ENCODE measurements at regions of chr11 and their contacts with region 1.

Region 1: DNA sequence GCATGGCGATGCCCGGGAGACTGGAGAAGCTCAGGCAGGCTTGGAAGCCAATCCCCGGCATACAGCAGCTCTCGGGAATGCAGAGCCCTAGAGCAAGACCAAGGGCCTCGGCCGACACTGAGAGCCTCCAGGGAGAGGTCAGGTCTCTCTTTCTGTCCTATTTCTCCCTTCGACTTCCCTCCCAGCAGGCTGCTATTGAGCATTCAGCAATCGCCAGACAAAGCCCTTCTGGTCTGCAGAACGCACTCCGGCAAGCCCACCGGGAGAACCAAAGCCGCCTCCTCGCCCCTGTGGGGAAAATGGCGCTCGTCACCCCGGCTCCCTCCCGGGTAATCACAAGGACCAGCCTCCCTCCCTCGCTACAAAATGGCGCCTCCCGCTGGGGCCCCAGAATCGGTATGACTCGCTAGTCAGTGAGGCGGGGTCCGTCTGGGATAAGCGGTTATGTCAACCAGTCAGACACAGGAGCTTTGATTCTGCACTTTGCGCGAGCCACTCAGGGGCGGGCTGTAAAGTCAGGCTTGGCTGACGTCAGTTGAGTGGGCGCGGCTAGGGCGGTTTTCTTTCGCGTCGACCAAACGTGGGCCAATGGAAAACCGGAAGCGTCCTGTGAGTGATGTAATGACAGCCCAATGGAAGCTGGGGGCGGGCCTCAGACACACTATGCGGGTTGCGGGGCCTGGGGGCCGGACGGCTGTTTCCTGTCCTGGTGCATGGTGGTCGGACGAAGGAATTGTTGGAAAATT is at the start of gene ZNF143:
- DNase-seq: peak; percentile 99
- ATAC-seq: peak; percentile 88
- H3K4me3 ChIP-seq: peak within 1 kb of the TSS; percentile 97 to 98 (median 98)
- H3K27ac ChIP-seq: peak within 1 kb of the TSS; percentile 99
- H3K4me1 ChIP-seq: peaks cover 22% of the 10 kb centered on the region
- H3K27me3 ChIP-seq: no peaks in the 10 kb centered on the region; a peak in 1 of 5 replicates
- CTCF ChIP-seq: no peak
- EP300 ChIP-seq: peak; percentile 12 to 15; a peak in 3 of 4 replicates
- POLR2A ChIP-seq: peak; percentile 81 to 87
- RAD21 ChIP-seq: no peak
- total RNA-seq, gene ZNF143: 22.4 and 32.9 TPM in 2 replicates

Region 2: DNA sequence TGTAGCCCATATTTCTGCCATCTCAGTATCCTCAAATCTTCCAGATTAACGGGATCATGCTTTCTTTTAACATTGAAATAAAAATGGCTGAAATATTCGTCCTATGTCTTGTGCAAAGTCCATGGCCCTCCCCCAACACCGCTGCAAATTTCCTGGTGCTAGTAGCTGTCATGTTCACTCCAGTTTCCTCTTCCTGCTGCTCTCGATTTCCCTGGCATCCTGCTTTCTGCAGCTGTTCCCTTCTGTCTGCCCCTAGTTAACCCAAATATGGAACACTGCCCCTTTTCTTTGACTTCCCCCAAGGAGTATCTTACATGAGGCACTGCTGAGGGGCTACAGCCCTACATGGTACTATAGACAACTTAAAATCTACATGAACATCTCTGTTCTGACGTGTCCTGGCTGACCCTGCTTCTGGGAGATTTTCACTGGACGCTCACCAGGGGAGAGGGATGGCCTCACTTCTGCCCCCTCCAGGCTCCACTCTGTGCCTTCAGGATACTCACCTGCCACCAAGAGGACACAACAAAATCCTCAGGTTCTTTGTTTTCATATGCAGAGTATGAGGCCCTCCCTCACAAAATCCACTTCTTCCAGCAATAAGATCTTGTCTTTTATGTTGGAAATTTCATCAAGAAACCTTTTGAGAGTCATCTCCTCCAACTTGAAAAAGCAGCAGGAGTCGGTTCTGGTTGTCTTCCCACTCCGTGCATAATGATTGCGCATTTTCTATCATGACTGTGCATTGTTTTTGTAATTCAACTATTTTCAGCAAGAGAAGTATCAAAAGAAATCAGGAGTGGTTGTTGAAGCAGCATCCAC is 339.6 kb before region 1 on chr11:
- CTCF ChIA-PET with region 1: no interaction called
- POLR2A ChIA-PET with region 1: no interaction called
- in situ Hi-C with region 1: no loop called
- intact Hi-C with region 1: no loop called
- DNase-seq: no peak
- ATAC-seq: peak; percentile 98
- H3K4me3 ChIP-seq: no peak overlapping the region
- H3K27ac ChIP-seq: no peak overlapping the region
- H3K4me1 ChIP-seq: no peaks in the 10 kb centered on the region
- H3K27me3 ChIP-seq: no peaks in the 10 kb centered on the region
- CTCF ChIP-seq: peak; percentile 63
- EP300 ChIP-seq: no peak
- POLR2A ChIP-seq: no peak
- RAD21 ChIP-seq: no peak

Region 3: DNA sequence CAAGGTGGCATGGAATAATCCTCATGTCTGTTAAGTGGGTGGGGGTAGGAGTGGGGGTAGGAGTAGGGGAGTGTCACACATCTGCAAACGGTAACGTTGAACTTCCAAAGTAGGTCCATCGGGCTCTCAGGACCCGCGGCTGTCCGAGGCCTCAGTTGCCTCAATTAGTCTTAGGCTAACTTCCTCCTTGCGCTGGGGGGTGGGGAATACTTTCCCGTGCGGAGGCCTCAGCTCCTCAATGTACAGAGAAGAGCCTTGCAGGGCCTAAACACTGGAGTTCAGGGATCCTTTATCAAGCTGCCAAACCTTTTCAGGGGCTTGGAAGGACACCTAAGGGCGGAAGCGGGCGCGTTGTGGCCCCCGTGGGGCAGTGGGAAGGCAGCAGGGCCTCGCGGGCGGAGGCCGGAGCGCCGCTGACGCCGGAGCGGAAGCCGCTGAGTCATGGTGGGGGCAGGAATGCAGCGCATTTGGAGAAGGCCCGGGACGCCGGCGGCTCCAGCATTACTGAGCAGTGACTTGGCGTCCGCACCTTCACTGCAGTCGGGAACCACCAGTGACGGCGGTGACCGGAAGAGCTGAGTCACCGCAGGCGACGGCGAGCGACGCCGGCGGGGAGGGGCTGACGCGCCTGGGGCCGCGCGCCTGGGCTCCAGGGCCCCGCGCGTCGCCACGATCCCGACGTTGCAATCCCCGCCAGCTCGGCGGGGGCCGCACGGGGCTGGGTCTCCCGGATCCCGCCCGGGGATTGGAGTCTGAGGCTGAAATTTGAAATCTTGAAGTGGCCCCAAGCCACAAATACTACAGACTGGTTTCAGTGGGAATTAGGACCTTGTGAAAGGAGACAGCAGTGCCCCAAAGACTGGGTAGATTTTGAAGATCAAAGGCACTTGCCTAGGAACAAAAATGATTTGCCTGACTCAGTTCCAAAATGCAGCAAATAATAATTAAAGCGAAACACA is 96.3 kb before region 1 on chr11:
- CTCF ChIA-PET with region 1: no interaction called
- POLR2A ChIA-PET with region 1: interaction called, 27 read pairs
- in situ Hi-C with region 1: no loop called
- intact Hi-C with region 1: no loop called
- DNase-seq: peak; percentile 94
- ATAC-seq: peak; percentile 96
- H3K4me3 ChIP-seq: peak overlapping the region; percentile 64 to 76 (median 68)
- H3K27ac ChIP-seq: peak overlapping the region; percentile 99
- H3K4me1 ChIP-seq: peaks cover 34% of the 10 kb centered on the region
- H3K27me3 ChIP-seq: no peaks in the 10 kb centered on the region
- CTCF ChIP-seq: peak; percentile 39
- EP300 ChIP-seq: peak; percentile 65 to 68
- POLR2A ChIP-seq: peak; percentile 74 to 78
- RAD21 ChIP-seq: peak; percentile 44; the same call in 1 of the 2 replicates

Region 4: GRCh38 chr11:9448576-9449352 is 11.7 kb before region 1 on chr11:
- CTCF ChIA-PET with region 1: no interaction called
- POLR2A ChIA-PET with region 1: interaction called, 27 read pairs
- in situ Hi-C with region 1: no loop called
- intact Hi-C with region 1: no loop called
- DNase-seq: no peak
- ATAC-seq: peak; percentile 13; the same call in 1 of the 3 replicates
- H3K4me3 ChIP-seq: no peak overlapping the region
- H3K27ac ChIP-seq: no peak overlapping the region
- H3K4me1 ChIP-seq: no peaks in the 10 kb centered on the region
- H3K27me3 ChIP-seq: no peaks in the 10 kb centered on the region
- CTCF ChIP-seq: no peak
- EP300 ChIP-seq: no peak
- POLR2A ChIP-seq: no peak
- RAD21 ChIP-seq: no peak

Region 5: DNA sequence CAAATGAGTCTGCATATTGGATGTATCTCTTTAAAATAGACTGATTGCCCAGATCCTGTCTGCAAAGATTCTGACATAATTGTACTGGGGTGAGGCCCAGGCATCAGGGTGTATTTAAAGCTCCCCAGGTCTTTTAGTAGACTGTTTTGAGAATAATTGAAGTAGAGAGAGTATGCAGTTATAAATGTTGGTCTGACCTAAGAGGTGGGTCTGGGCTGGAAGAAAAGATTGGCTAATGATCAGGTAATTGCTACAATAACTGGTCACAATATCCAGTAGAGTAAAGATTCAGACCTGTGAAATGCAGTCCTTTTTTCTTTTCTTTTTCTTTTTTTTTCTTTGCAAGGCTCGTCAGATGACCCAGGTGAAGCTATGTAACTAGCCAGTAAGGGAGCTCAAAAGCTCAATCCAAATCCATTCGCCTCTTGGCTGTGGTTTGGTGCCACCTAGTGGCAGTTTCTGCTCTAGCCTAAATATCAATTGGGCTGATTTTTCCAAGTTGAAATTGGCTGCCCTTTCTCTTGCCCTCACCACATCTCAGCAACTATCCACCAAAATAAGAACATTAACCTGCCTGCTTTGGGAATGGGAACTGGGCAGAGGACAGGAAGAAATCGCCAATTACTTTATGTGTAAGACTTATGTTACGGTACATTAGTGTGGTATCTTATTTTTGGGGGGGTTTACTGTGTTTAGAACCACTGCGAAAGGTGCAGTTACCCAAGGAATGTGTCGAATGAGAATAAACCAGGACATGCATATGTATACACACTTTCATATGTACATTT is 46.2 kb after region 1 on chr11:
- CTCF ChIA-PET with region 1: no interaction called
- POLR2A ChIA-PET with region 1: interaction called, 27 read pairs
- in situ Hi-C with region 1: no loop called
- intact Hi-C with region 1: loop called (anchors 5 kb)
- DNase-seq: peak; percentile 72
- ATAC-seq: peak; percentile 70
- H3K4me3 ChIP-seq: no peak overlapping the region
- H3K27ac ChIP-seq: no peak overlapping the region
- H3K4me1 ChIP-seq: peaks cover 36% of the 10 kb centered on the region
- H3K27me3 ChIP-seq: no peaks in the 10 kb centered on the region
- CTCF ChIP-seq: peak; percentile 90
- EP300 ChIP-seq: no peak
- POLR2A ChIP-seq: no peak
- RAD21 ChIP-seq: peak; percentile 79

Region 6: DNA sequence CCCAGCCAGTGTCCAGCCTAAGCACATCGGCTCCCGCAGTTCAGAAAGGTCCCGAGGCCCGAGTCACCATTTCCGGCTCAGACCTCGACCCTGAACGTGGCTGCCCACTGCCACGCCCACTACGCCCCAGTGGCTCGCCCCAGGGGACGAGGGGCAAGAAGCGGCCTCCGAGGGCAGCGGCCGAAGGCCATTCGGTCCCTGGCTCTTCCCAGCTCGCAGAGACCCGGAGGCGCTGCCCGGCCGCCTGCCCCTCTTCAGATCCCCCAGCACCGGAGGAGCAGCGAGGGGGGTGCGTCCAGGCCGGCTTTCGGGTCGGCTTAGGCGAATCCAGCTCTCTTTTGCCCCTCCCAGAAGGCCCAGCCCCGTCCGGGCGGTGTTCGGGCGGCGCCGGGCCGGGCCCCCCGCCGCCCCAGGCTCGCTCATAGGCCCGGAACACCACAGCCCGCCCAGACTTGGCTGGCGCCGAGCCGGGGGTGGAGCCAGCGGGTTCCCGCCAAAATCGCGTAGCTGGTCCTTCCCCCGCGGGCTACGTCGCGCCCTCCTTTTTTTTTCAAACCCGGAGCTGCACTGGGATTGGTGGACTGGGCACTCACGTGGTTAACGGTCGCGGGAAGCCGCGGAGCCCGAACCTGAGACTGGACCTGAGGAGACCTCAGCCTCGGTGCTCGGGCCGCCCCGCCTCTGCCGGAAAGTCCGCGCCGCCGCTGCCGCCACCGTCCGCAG is 112.7 kb after region 1 on chr11 and contains the start of gene WEE1:
- CTCF ChIA-PET with region 1: no interaction called
- POLR2A ChIA-PET with region 1: interaction called, 19 read pairs
- in situ Hi-C with region 1: no loop called
- intact Hi-C with region 1: loop called (anchors 5 kb)
- DNase-seq: peak; percentile 94
- ATAC-seq: peak; percentile 88
- H3K4me3 ChIP-seq: peak within 1 kb of the TSS; percentile 78 to 90 (median 87)
- H3K27ac ChIP-seq: peak within 1 kb of the TSS; percentile 100
- H3K4me1 ChIP-seq: peaks cover 67% of the 10 kb centered on the region
- H3K27me3 ChIP-seq: no peaks in the 10 kb centered on the region; a peak in 1 of 5 replicates
- CTCF ChIP-seq: no peak
- EP300 ChIP-seq: peak in 1 of 2 experiments; percentile 16; a peak in 2 of 4 replicates
- POLR2A ChIP-seq: peak in 1 of 2 experiments; percentile 91
- RAD21 ChIP-seq: no peak; the same call in 1 of the 2 replicates
- total RNA-seq, gene WEE1: 63.7 and 71.7 TPM in 2 replicates